ENCODE measurements at regions of chr1 and their contacts with region 1.

Region 1: GRCh38 chr1:156226116-156226538 is 13.3 kb downstream of the PMF1 start:
- DNase-seq: peak; percentile 66
- ATAC-seq: peak; percentile 25
- H3K4me3 Mint-ChIP-seq: peak overlapping the region; percentile 38
- H3K27ac Mint-ChIP-seq: peak overlapping the region; percentile 96
- H3K4me1 Mint-ChIP-seq: peaks cover 64% of the 10 kb centered on the region
- H3K27me3 Mint-ChIP-seq: no peaks in the 10 kb centered on the region

Region 2: DNA sequence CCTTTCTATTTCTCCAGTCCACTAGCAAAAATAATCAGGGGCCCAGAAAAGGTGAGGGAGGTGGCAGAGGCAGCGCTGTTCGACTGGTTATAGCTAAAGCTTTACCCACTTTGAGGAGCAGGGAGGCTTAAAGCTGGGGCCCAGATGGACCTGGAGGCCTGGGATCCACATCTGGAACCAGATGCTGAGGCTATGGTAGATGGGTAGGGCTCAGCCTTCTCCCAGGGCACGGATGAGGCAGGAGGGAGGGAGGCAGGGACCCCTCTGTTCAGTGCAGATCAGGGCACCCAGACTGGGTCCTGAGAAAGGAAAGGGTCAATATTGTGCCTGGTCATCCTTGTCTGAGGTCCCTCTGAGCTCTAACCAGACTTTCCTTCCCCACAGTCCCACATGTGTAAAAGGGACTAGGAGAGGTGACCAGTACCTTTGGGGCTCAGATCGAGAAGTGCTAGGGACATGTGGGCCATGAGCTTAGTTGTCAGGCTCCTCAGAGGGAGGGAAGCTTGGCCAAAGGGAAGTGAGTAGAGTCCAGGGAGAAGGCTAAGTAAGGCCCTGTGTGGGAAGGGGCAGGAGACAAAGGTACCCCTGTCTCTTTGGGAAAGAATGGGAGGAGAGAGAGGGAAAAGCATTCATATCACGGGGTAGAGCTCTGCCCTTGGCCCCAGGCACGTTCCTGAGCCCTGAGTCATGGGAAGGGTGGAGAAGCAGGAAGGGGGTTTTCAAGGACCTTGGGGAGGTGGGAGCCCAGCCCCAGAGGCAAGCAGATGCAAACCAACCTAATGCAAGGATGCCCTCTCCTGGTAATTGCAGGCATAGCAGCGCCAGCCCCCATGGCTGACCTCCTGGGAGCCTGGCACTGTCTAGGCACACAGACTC is 96.2 kb before region 1 on chr1:
- CTCF ChIA-PET with region 1: interaction called, 18 read pairs
- DNase-seq: peak; percentile 84
- ATAC-seq: no peak
- H3K4me3 Mint-ChIP-seq: no peak overlapping the region
- H3K27ac Mint-ChIP-seq: no peak overlapping the region
- H3K4me1 Mint-ChIP-seq: peaks cover 52% of the 10 kb centered on the region
- H3K27me3 Mint-ChIP-seq: peaks cover 7% of the 10 kb centered on the region

Region 3: DNA sequence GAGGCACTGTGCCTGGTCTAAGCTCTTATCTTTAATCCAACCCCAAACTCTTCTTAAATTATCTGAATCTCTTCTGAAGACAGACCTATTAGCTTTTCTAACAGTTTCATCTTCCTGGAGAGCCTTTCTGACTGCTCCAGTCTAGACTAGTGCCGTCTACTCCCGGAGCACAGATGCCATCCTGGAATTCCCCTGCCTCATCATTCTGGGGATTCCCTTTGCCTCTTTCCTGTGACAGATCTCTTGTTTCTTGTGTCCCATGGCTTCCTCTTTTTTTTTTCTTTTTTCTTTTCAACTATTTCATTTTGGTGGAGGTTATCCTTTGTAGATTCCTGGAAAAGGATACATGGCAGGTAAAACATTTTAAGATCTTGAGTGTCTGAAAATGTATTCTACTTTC is 61.0 kb before region 1 on chr1:
- CTCF ChIA-PET with region 1: interaction called, 21 read pairs
- DNase-seq: no peak
- ATAC-seq: no peak
- H3K4me3 Mint-ChIP-seq: no peak overlapping the region
- H3K27ac Mint-ChIP-seq: no peak overlapping the region
- H3K4me1 Mint-ChIP-seq: peaks cover 17% of the 10 kb centered on the region
- H3K27me3 Mint-ChIP-seq: no peaks in the 10 kb centered on the region

Region 4: GRCh38 chr1:156198831-156199349 is 27.2 kb before region 1 on chr1:
- CTCF ChIA-PET with region 1: interaction called, 47 read pairs
- DNase-seq: peak; percentile 63
- ATAC-seq: peak; percentile 73
- H3K4me3 Mint-ChIP-seq: peak overlapping the region; percentile 40
- H3K27ac Mint-ChIP-seq: peak overlapping the region; percentile 88
- H3K4me1 Mint-ChIP-seq: peaks cover 64% of the 10 kb centered on the region
- H3K27me3 Mint-ChIP-seq: no peaks in the 10 kb centered on the region

Region 5: GRCh38 chr1:156245451-156246232 is 19.5 kb after region 1 on chr1:
- CTCF ChIA-PET with region 1: interaction called, 22 read pairs
- DNase-seq: peak; percentile 61
- ATAC-seq: peak; percentile 75
- H3K4me3 Mint-ChIP-seq: peak overlapping the region; percentile 74
- H3K27ac Mint-ChIP-seq: peak overlapping the region; percentile 78
- H3K4me1 Mint-ChIP-seq: peaks cover 26% of the 10 kb centered on the region
- H3K27me3 Mint-ChIP-seq: no peaks in the 10 kb centered on the region

Region 6: GRCh38 chr1:156282479-156283222 is 56.5 kb after region 1 on chr1 and contains the start of gene SMG5:
- CTCF ChIA-PET with region 1: interaction called, 24 read pairs
- DNase-seq: peak; percentile 99
- ATAC-seq: peak; percentile 92
- H3K4me3 Mint-ChIP-seq: peak within 1 kb of the TSS; percentile 94
- H3K27ac Mint-ChIP-seq: peak within 1 kb of the TSS; percentile 91
- H3K4me1 Mint-ChIP-seq: peaks cover 39% of the 10 kb centered on the region
- H3K27me3 Mint-ChIP-seq: no peaks in the 10 kb centered on the region
- total RNA-seq, gene SMG5: 89.4 to 103 TPM

Measured in activated CD8-positive, alpha-beta memory T cell treated with anti-CD3 and anti-CD28 coated beads, Interleukin-2, amount 10 ng/mL, durations not matched to agents 7 days and 5 days (primary cell).